Endothelial cell of umbilical vein (primary cell): ENCODE measurements at regions of chr11 and their contacts with region 1.

Region 1: GRCh38 chr11:126989942-126990715 is 10.4 kb downstream of the KIRREL3 start:
- DNase-seq: peak; percentile 35
- H3K4me3 ChIP-seq: no peak overlapping the region
- H3K27ac ChIP-seq: no peak overlapping the region
- H3K4me1 ChIP-seq: no peaks in the 10 kb centered on the region
- H3K27me3 ChIP-seq: no peaks in the 10 kb centered on the region
- CTCF ChIP-seq: peak; percentile 76 to 96
- POLR2A ChIP-seq: no peak

Region 2: DNA sequence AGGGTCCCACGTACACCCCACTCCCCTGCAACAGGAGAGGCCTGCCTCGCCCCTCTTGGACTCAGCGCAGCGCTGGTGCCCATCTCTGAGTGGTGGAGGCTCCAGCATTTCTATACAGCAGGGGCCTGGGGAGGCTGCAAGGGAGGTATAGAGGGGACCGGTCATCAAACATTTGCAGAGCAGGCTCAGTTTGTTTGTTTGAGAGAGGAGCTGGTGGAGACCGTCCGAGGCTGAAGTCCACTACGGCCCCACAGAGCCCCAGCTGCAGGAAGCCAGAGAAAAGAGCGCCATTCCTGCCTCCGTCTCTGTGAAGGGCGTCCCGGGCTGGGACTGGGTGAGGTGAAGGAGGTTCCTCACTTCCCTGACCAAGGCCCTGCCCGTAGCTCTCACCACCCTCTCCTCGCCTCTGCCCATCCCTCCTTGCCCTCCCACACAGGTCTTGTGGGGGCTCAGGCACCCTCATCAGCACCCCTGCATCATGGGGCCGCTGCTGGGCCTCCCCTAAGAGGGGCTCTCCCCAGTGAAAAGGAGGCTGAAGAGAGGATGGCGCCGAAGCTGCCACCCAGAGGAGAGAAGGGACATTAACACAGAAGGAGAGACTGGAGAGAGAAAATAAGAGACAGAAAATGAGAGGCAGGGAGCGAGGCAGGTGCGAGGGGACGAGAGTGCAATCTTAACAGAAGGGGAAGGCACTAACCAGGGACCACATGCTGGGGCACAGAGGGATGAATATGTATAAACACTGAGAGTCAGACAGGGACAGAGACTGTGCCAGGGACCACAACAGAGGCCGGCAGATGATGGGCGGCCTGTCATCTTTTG is 803.2 kb before region 1 on chr11:
- CTCF ChIA-PET with region 1: no interaction called
- POLR2A ChIA-PET with region 1: no interaction called
- dilution Hi-C with region 1: no loop called
- intact Hi-C with region 1: no loop called
- DNase-seq: no peak
- H3K4me3 ChIP-seq: no peak overlapping the region
- H3K27ac ChIP-seq: no peak overlapping the region
- H3K4me1 ChIP-seq: no peaks in the 10 kb centered on the region
- H3K27me3 ChIP-seq: no peaks in the 10 kb centered on the region
- CTCF ChIP-seq: peak in 1 of 2 donors; percentile 7
- POLR2A ChIP-seq: no peak

Region 3: DNA sequence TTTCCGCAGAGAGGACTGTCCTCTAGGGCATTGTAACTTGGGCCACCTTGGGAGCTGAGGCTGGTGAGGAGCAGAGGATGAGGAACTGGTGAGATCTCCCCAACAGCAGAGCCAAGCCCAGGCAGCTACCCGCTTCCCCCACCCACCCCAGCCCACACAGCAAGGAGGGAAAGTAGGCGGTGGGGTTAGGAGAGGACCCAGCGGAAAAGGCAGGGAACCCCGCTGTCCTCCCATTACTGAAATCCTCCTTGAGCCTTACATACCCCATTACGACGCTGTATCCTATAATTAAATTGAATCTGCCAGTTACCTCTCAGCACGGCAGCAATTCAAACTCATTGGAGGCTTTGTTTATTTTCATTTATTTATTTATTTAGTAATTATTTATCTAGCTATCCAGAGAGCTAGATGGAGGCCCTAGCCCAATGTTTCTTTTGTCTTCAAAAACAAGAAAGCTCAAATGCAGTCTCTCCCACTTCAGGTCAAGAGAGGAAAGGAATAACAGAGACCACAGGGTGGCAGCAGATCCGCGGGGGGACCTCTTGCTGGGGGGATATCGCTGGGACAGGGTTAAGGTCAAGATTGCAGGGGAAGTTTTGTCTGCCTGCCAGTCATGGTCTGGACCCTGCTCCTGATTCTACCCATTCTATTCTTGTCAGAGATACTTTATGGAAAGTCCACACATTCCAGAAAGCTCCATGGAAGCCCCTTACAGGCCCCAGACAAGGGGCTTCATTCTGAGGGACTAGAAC is 416.6 kb before region 1 on chr11:
- CTCF ChIA-PET with region 1: interaction called, 22 read pairs
- POLR2A ChIA-PET with region 1: no interaction called
- dilution Hi-C with region 1: no loop called
- intact Hi-C with region 1: loop called (anchors 1 kb)
- DNase-seq: peak; percentile 3
- H3K4me3 ChIP-seq: no peak overlapping the region
- H3K27ac ChIP-seq: no peak overlapping the region
- H3K4me1 ChIP-seq: no peaks in the 10 kb centered on the region
- H3K27me3 ChIP-seq: no peaks in the 10 kb centered on the region
- CTCF ChIP-seq: peak in 1 of 2 donors; percentile 27
- POLR2A ChIP-seq: no peak

Region 4: DNA sequence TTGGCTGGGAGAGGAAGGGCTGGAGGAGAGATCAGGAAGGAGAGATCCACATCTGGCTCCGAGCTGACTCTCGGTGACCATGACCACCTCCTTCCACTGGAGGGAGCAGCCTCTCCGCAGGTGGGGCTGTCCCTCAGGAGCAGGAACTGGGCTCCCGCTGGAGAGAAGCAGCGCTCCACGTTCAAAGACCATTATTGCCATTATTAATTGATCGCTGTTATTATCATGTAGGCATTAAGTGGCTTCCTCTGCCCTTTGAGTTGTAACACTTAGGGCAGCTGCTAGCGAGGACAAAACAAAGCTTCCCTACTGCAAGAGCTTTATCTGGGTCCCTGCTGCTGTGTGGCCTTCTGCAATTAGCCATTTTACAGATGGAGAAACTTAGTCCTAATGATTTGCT is 382.8 kb before region 1 on chr11:
- CTCF ChIA-PET with region 1: interaction called, 10 read pairs
- POLR2A ChIA-PET with region 1: no interaction called
- dilution Hi-C with region 1: no loop called
- intact Hi-C with region 1: loop called (anchors 1 kb)
- DNase-seq: peak; percentile 5
- H3K4me3 ChIP-seq: no peak overlapping the region
- H3K27ac ChIP-seq: no peak overlapping the region
- H3K4me1 ChIP-seq: no peaks in the 10 kb centered on the region
- H3K27me3 ChIP-seq: no peaks in the 10 kb centered on the region
- CTCF ChIP-seq: peak; percentile 42 to 61
- POLR2A ChIP-seq: no peak

Region 5: DNA sequence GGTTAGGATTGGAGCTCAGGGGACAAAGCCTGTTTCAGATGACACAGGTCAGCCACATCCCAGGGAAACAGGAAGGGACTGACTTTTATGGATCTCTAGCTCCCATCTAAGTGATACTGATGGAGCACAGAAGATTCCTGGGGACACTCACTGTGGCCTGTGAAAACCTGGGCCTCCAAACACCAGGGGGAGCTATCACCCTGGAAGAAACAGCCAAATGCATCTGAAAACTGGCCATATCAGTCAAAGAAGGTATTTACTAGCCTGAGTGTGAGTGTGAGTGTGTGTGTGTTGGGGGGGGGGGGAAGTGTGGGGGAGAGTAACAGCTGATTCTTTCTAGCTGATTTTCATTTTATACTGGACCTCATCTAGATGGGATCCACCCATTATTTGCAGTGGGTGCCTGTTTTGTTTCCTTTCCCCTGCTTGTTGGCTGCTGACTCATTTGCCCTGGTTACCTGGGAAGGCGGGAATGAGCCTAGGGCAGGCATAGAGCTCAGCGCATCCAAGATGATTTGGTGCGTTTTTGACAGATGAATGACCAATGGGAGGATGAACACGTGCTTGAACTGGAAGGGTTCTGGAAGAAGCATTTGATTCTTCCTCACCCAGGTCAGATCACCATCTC is 273.6 kb before region 1 on chr11:
- CTCF ChIA-PET with region 1: no interaction called
- POLR2A ChIA-PET with region 1: no interaction called
- dilution Hi-C with region 1: no loop called
- intact Hi-C with region 1: loop called (anchors 5 kb)
- DNase-seq: no peak
- H3K4me3 ChIP-seq: no peak overlapping the region
- H3K27ac ChIP-seq: no peak overlapping the region
- H3K4me1 ChIP-seq: no peaks in the 10 kb centered on the region
- H3K27me3 ChIP-seq: no peaks in the 10 kb centered on the region
- CTCF ChIP-seq: peak in 1 of 2 donors; percentile 22
- POLR2A ChIP-seq: no peak